Activated CD8-positive, alpha-beta T cell treated with anti-CD3 and anti-CD28 coated beads for 36 hours (primary cell): ENCODE measurements at regions of chr17 and their contacts with region 1.

Region 1: GRCh38 chr17:77140166-77140878 is 447 bp upstream of the SEC14L1 start:
- DNase-seq: peak; percentile 99
- ATAC-seq: peak; percentile 87
- H3K4me3 Mint-ChIP-seq: peak overlapping the region; percentile 72
- H3K27ac Mint-ChIP-seq: peak overlapping the region; percentile 97
- H3K4me1 Mint-ChIP-seq: peaks cover 48% of the 10 kb centered on the region
- H3K27me3 Mint-ChIP-seq: no peaks in the 10 kb centered on the region
- CTCF ChIP-seq: no peak

Region 2: DNA sequence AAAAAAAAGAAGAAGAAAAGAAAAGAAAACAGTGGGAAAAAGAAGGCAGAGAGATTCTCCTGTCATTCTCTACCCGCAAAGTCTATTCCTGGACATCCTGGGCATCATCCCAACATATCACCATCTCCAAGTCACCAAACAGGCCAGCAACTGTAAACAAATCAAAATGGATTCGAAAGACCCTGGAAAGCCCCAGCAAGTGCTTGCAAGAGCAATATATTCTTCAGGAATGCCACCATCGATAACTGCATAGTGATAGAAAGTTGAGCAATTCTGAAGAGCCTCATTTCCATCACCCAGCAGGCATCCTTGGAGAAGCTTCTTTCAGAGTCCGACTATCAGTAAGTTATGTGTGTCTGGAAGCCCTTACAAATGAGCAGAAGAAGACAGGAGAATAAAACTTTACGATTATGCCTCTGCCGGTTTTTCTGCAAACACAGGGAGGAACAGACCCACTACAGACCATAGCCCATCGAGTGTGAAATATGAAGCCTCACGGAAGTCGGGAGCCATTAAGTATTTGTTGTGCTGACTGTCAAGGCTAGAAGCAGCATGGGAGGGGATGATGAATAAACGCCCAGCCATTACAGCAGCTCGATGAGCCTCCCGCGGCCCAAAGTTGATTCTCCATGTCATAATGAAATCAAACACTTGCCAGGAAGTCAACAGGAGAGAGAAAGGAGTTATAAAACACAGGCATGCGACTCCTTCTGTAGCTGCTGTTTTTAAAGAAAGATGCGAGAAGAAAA is 64.0 kb before region 1 on chr17:
- CTCF ChIA-PET with region 1: no interaction called
- POLR2A ChIA-PET with region 1: no interaction called
- intact Hi-C with region 1: no loop called
- DNase-seq: no peak
- ATAC-seq: no peak
- H3K4me3 Mint-ChIP-seq: no peak overlapping the region
- H3K27ac Mint-ChIP-seq: no peak overlapping the region
- H3K4me1 Mint-ChIP-seq: no peaks in the 10 kb centered on the region
- H3K27me3 Mint-ChIP-seq: peaks cover 23% of the 10 kb centered on the region
- CTCF ChIP-seq: no peak

Region 3: GRCh38 chr17:77109764-77110359 is 30.5 kb before region 1 on chr17:
- CTCF ChIA-PET with region 1: no interaction called
- POLR2A ChIA-PET with region 1: interaction called, 7 read pairs
- intact Hi-C with region 1: loop called (anchors 5 kb)
- DNase-seq: no peak
- ATAC-seq: no peak
- H3K4me3 Mint-ChIP-seq: no peak overlapping the region
- H3K27ac Mint-ChIP-seq: peak overlapping the region; percentile 55
- H3K4me1 Mint-ChIP-seq: peaks cover 43% of the 10 kb centered on the region
- H3K27me3 Mint-ChIP-seq: no peaks in the 10 kb centered on the region
- CTCF ChIP-seq: no peak

Region 4: DNA sequence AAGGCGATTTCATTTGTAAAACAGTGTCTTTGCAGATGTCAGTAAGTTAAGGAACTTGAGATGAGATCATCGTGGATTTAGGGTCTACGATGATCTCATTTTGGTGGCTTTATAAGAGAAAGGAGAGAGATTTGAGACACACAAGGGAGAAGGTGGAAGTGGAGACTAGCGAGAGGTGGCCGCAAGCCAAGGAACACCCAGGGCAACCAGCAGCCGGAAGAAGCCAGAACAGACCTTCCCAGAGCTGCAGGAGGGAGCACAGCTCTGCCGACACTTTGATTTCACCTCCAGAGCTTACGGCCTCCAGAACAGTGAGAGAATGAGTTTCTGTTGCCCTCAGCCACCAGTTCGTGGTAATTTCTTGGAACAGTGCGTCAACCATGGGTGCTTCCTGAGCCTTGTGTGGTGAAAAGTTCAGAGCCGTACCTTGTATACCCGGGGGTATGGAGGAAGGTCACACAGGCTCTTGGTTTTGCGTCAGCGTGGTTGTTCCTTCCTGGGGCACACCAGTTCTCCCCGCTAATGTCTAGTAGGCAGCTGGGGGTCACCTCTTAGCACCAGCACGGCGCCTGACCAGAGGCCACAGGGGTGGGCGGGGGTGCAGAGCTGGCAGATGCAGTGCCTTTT is 12.5 kb before region 1 on chr17:
- CTCF ChIA-PET with region 1: interaction called, 22 read pairs
- POLR2A ChIA-PET with region 1: interaction called, 39 read pairs
- intact Hi-C with region 1: no loop called
- DNase-seq: peak; percentile 91
- ATAC-seq: peak; percentile 94
- H3K4me3 Mint-ChIP-seq: peak overlapping the region; percentile 64
- H3K27ac Mint-ChIP-seq: peak overlapping the region; percentile 92
- H3K4me1 Mint-ChIP-seq: peaks cover 41% of the 10 kb centered on the region
- H3K27me3 Mint-ChIP-seq: no peaks in the 10 kb centered on the region
- CTCF ChIP-seq: no peak